Psoas muscle (tissue), 8 donors: ENCODE measurements at regions of chr9 and their contacts with region 1.

Region 1: DNA sequence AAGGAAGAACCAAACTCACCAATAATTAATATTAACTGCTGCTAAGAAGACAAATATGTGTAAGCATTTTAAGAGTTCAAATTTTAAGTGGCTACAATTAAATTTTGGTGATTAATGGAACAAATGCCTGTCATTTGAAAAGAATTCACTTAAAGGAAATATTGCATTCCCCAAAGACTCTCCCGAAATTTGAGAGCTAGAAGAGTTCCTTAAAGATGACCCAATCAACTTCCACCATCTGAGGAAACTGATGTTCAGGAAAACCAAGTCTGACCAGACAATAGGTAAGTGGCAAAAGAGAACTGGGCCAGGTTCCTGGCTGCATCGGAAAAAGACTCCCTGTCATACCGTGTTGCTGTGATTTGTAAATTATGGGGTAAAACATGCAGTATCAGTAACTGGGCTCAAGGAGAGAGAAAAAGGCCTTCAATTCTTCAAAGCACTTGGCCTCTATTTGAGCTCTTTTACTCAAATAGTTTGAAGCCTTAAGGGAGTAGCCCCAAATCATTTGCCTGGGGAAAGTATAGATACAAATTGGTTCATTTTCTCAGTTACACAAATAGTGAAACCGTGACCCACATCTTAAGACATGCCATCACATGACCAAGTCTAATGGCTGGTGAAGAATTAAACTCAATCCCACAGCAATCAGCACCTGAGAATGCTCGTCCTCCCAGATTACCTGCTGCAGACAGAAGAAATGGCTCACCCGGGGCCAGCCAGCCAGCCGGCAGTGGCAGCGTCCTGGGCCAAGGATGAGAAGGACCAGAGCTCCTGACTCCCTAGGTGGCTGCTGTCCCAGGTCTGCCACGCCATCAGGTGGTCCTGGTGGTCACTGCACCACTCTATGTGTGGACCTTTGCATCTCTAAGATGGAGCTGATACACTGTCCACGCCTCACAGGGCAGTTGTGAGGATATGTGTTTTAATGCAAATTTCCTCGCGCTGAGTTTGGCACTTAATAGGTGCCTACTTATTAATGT is 162.9 kb downstream of the TTLL11 start:
- DNase-seq: no peak
- ATAC-seq: peak in 3 of 4 donors; percentile 38 to 41 (median 40)
- H3K4me3 ChIP-seq: no peak overlapping the region
- H3K27ac ChIP-seq: no peak overlapping the region
- H3K4me1 ChIP-seq: no peaks in the 10 kb centered on the region
- H3K27me3 ChIP-seq: no peaks in the 10 kb centered on the region
- CTCF ChIP-seq: no peak

Region 2: DNA sequence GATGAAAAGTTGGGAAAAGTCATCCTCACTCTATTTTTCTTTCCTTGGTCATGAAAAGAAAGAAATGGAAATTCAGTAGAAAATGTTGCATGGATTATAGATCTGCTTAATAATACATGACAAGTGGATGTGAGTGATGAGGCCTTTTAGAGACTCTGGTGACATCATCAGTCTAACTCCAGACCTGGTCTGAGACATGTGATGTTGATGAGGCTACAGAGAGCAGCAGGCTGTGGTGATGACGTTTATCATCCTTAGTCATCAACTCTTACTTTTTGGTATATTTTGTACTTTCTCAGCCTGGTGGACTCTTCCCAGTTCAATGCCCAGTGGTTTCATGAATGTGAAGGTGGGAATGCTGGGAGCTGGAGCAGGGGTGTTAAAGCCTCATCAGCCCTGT is 46.6 kb after region 1 on chr9:
- intact Hi-C with region 1: loop called in 1 of 2 experiments (anchors 5 kb)
- DNase-seq: no peak
- ATAC-seq: peak in 2 of 4 donors; percentile 38 to 60
- H3K4me3 ChIP-seq: no peak overlapping the region
- H3K27ac ChIP-seq: no peak overlapping the region
- H3K4me1 ChIP-seq: peaks cover 4% of the 10 kb centered on the region
- H3K27me3 ChIP-seq: no peaks in the 10 kb centered on the region
- CTCF ChIP-seq: no peak